ENCODE measurements at regions of chr16 and their contacts with region 1.

Region 1: GRCh38 chr16:72124761-72125634 is 31.4 kb downstream of the DHX38 start:
- DNase-seq: peak; percentile 67
- H3K4me3 ChIP-seq: no peak overlapping the region
- H3K27ac ChIP-seq: no peak overlapping the region
- H3K4me1 ChIP-seq: peaks cover 3% of the 10 kb centered on the region
- H3K27me3 ChIP-seq: no peaks in the 10 kb centered on the region
- CTCF ChIP-seq: peak; percentile 76 to 82
- POLR2A ChIP-seq: no peak

Region 2: DNA sequence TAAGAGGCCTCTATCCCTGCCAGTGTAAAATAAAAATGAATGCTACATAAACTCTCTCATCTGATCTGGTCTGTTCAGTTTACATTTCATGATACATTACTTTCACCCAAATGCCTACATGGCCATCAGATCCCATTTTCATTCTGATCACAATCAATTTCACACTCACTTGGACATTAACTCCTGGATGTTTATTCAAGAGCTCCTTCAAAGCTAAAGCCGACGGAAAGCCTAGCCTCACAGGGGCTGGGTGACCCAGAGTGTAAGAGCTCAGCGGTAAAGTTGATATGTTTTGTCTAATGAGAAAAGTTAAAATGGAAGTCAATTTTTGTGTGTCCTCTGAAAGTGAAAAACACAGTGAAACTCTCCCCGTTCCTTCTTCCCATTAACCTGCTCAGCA is 145.4 kb before region 1 on chr16:
- CTCF ChIA-PET with region 1: no interaction called
- POLR2A ChIA-PET with region 1: no interaction called
- dilution Hi-C with region 1: no loop called
- intact Hi-C with region 1: no loop called
- DNase-seq: no peak
- H3K4me3 ChIP-seq: no peak overlapping the region
- H3K27ac ChIP-seq: no peak overlapping the region
- H3K4me1 ChIP-seq: no peaks in the 10 kb centered on the region
- H3K27me3 ChIP-seq: no peaks in the 10 kb centered on the region
- CTCF ChIP-seq: no peak
- POLR2A ChIP-seq: no peak

Region 3: DNA sequence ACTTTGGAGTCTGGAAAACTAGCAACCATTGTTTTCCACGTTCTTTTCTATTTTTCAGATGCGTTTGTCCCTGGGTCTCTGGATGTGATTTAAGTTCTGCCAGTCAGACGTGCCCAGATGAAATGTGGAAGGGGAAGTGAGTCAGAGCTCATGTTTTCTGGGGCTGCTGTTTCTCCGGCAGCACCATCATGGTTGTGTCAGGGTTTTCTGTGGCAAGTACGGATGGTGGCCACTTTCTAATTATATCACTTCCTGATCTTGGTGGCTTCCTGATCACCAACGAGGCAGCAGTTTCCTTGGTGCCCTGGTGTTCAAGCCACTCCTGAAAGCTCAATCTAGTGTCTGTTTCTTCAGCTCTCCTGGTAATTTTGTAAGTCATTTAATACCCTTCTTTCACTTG is 78.4 kb after region 1 on chr16:
- CTCF ChIA-PET with region 1: interaction called, 4 read pairs
- POLR2A ChIA-PET with region 1: no interaction called
- dilution Hi-C with region 1: no loop called
- intact Hi-C with region 1: loop called (anchors 2 kb)
- DNase-seq: peak; percentile 83
- H3K4me3 ChIP-seq: no peak overlapping the region
- H3K27ac ChIP-seq: peak overlapping the region; percentile 71
- H3K4me1 ChIP-seq: peaks cover 14% of the 10 kb centered on the region
- H3K27me3 ChIP-seq: no peaks in the 10 kb centered on the region
- CTCF ChIP-seq: no peak
- POLR2A ChIP-seq: no peak

Region 4: GRCh38 chr16:72467157-72467759 is 342.3 kb after region 1 on chr16:
- CTCF ChIA-PET with region 1: interaction called, 49 read pairs
- POLR2A ChIA-PET with region 1: no interaction called
- dilution Hi-C with region 1: loop called (anchors 25 kb)
- intact Hi-C with region 1: loop called (anchors 1 kb)
- DNase-seq: peak; percentile 72
- H3K4me3 ChIP-seq: no peak overlapping the region
- H3K27ac ChIP-seq: no peak overlapping the region
- H3K4me1 ChIP-seq: peaks cover 7% of the 10 kb centered on the region
- H3K27me3 ChIP-seq: no peaks in the 10 kb centered on the region
- CTCF ChIP-seq: peak; percentile 42 to 53
- POLR2A ChIP-seq: no peak

Region 5: GRCh38 chr16:73878611-73879010 is 1753.6 kb after region 1 on chr16:
- CTCF ChIA-PET with region 1: interaction called, 36 read pairs
- POLR2A ChIA-PET with region 1: no interaction called
- dilution Hi-C with region 1: no loop called
- intact Hi-C with region 1: no loop called
- DNase-seq: peak; percentile 65
- H3K4me3 ChIP-seq: no peak overlapping the region
- H3K27ac ChIP-seq: no peak overlapping the region
- H3K4me1 ChIP-seq: no peaks in the 10 kb centered on the region
- H3K27me3 ChIP-seq: no peaks in the 10 kb centered on the region
- CTCF ChIP-seq: peak in 1 of 2 donors; percentile 34
- POLR2A ChIP-seq: no peak

Region 6: DNA sequence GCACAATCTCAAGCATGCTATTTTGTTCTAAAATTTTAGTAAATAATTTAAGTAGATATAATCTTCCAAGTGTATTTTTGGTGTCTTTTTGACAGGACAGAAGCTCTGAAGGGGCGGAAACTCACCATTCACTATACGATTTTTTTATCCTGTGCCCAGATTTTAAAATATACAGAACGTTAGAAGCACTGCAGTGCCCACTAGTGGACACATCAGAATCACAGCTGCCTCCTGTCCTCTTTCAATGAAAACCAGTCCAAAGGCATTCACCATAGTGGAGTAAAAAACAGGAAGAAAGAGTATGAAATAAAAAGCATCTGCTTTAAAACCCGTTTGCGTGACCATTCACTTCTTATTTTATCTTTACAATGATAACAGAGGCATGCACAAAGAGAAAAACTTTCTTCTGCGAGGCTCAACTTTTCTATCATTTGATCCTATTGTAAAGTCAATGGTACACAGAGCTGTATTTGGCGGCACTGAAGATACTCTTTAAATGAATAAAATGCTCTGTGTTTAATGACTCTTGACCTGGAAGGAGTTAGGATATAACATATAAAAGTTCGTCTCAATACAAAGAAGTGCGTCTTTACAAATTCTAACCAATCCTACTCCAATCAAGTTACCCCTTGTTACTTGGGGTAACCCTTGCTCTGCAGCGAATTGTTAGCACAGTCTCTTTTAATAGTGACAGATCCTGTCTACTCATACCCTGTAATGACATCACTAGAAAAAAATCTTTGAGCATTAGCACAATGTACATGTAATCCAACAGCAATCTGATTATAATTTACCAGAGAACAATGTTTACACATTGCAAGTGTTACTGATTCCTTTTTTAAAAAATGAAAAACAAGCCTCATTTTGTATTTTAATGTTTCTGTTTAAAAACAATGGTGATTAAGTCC is 1831.8 kb after region 1 on chr16:
- CTCF ChIA-PET with region 1: interaction called, 28 read pairs
- POLR2A ChIA-PET with region 1: no interaction called
- dilution Hi-C with region 1: no loop called
- intact Hi-C with region 1: no loop called
- DNase-seq: peak; percentile 53
- H3K4me3 ChIP-seq: no peak overlapping the region
- H3K27ac ChIP-seq: no peak overlapping the region
- H3K4me1 ChIP-seq: no peaks in the 10 kb centered on the region
- H3K27me3 ChIP-seq: no peaks in the 10 kb centered on the region
- CTCF ChIP-seq: peak; percentile 69 to 72
- POLR2A ChIP-seq: no peak

Region 7: DNA sequence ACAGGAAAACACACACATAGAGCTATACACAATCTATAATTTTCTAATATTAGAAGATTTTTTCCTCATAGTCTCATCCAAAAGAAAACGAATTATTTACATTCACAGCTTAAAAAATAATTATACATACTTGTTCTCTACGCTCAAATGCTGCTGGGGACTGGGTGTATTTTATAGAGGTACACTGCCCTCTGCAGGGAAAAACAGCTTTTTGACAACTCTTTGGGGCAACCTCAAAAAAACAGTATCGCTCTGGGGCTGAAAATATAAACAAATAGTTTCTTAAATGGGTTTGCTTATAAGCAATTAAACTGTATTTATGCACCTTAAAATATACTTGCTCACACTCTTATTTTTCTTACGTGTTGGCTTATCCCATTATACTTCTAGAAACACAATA is 1909.9 kb after region 1 on chr16:
- CTCF ChIA-PET with region 1: interaction called, 16 read pairs
- POLR2A ChIA-PET with region 1: no interaction called
- dilution Hi-C with region 1: no loop called
- intact Hi-C with region 1: loop called (anchors 10 kb)
- DNase-seq: peak; percentile 3
- H3K4me3 ChIP-seq: no peak overlapping the region
- H3K27ac ChIP-seq: no peak overlapping the region
- H3K4me1 ChIP-seq: no peaks in the 10 kb centered on the region
- H3K27me3 ChIP-seq: no peaks in the 10 kb centered on the region
- CTCF ChIP-seq: peak in 1 of 2 donors; percentile 21
- POLR2A ChIP-seq: no peak